Activated T-helper 2 cell treated with anti-CD3 and anti-CD28 coated beads, Interferon-gamma antibody, Interleukin-2, Interleukin-4, amounts not matched to agents 10 μg/mL and 5 μg/mL and 100 μg/mL, durations not matched to agents 14 hours and 24 hours and 36 hours (primary cell): ENCODE measurements at regions of chr6 and their contacts with region 1.

Region 1: DNA sequence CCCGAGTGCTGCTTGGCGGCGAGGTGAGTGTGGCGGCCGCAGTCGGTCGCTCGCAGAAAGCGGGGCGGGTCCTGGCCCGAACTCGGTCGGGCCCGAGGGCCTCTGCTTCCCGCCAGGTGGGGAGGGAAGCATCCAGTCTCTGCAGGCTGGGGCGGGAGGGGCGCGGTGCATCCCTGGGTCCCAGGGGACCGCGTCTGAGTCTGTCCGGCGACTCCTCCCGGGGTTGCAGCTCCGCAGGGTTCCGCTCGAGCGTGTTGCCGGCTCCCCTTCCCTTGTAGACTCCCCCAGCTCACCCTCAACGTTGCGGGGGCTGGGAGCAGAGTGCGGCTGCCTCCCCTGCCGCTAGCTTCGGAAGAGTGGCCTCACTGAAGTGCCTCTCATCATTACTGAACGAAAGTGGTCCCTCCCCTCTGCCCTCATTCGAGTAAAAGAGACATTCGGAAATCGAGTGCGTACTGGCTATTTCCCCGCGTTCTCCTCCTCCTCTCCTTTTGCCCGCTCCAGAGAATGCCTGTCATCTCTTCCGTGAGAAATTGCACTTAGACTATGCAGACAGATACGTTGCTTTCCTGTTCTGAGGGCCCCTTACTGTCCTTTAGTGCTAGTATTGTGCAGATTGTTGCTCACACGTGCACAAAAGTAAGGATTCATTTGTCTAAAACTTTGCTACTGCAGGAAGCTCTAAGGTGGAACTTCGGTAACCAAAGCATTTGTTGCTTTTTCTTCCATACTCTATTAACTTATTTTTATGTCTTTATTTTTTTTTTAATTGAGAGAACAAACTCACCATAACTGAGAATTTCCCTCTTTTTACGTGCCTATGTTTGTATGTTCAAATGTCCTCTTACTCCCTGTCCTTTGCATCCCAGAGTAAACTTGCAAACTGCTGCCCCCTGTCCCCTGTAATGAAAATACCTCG is 751 bp downstream of the MAP3K4 start:
- DNase-seq: no peak
- H3K4me3 Mint-ChIP-seq: peak overlapping the region; percentile 92
- H3K27ac Mint-ChIP-seq: peak overlapping the region; percentile 85
- H3K4me1 Mint-ChIP-seq: peaks cover 21% of the 10 kb centered on the region
- H3K27me3 Mint-ChIP-seq: peaks cover 14% of the 10 kb centered on the region

Region 2: DNA sequence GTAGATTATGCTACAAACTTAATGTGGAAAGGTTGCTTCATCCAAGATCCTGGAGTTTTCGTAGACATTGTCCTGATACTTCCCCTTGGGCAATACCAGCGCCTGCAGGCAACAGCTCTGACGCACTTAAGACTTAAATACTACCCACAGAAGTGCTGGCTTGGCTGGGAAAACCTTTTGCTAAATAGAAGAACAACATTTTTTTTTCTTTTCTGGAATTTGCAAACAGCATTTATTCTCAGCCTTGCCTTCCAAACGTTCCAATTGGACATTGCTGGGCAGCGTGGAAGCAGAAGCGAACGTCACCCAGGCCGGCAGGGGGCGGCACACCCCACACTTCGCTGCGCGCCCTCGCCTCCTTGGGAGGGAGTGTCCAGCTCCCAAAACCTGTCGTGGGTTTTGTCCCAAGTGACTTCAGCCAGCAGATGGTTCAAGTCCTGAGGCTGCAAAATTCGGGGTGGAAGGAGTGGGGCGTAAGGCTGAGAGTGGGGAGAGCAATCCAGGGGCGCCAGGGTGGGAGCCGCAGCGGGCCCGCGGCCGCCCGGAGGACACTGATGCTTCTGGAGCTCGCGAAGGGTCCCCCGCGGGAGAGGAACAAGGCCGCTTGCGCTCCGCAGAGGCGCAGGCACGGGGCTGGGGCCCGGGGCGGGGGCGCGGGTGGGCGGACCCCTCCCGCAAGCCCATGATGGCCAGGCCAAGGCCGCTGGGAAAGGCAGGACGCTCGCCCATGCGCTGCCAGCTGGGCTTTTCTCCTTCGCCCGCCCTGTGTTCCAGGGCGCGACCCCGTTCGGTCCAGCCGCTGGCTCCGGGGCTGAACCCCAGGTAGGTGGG is 61.6 kb before region 1 on chr6:
- intact Hi-C with region 1: loop called (anchors 2 kb)
- DNase-seq: peak; percentile 32
- H3K4me3 Mint-ChIP-seq: peak overlapping the region; percentile 18
- H3K27ac Mint-ChIP-seq: no peak overlapping the region
- H3K4me1 Mint-ChIP-seq: no peaks in the 10 kb centered on the region
- H3K27me3 Mint-ChIP-seq: peaks cover 25% of the 10 kb centered on the region

Region 3: GRCh38 chr6:160950507-160950906 is 41.8 kb before region 1 on chr6:
- intact Hi-C with region 1: no loop called
- DNase-seq: no peak
- H3K4me3 Mint-ChIP-seq: no peak overlapping the region
- H3K27ac Mint-ChIP-seq: no peak overlapping the region
- H3K4me1 Mint-ChIP-seq: no peaks in the 10 kb centered on the region
- H3K27me3 Mint-ChIP-seq: peaks cover 15% of the 10 kb centered on the region

Region 4: DNA sequence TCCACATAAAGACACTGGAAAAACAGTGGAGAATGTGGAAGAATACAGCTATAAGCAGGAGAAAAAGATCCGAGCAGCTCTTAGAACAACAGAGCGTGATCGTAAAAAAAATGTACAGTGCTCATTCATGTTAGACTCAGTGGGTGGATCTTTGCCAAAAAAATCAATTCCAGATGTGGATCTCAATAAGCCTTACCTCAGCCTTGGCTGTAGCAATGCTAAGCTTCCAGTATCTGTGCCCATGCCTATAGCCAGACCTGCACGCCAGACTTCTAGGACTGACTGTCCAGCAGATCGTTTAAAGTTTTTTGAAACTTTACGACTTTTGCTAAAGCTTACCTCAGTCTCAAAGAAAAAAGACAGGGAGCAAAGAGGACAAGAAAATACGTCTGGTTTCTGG is 56.3 kb after region 1 on chr6:
- intact Hi-C with region 1: no loop called
- DNase-seq: no peak
- H3K4me3 Mint-ChIP-seq: no peak overlapping the region
- H3K27ac Mint-ChIP-seq: no peak overlapping the region
- H3K4me1 Mint-ChIP-seq: peaks cover 18% of the 10 kb centered on the region
- H3K27me3 Mint-ChIP-seq: no peaks in the 10 kb centered on the region

Region 5: GRCh38 chr6:161128680-161129196 is 136.4 kb after region 1 on chr6:
- intact Hi-C with region 1: loop called (anchors 5 kb)
- DNase-seq: no peak
- H3K4me3 Mint-ChIP-seq: peak overlapping the region; percentile 15
- H3K27ac Mint-ChIP-seq: peak overlapping the region; percentile 93
- H3K4me1 Mint-ChIP-seq: peaks cover 20% of the 10 kb centered on the region
- H3K27me3 Mint-ChIP-seq: no peaks in the 10 kb centered on the region

Region 6: GRCh38 chr6:161273752-161274487 is 281.6 kb after region 1 on chr6 and contains the start of gene AGPAT4:
- intact Hi-C with region 1: loop called (anchors 1 kb)
- DNase-seq: peak; percentile 74
- H3K4me3 Mint-ChIP-seq: peak within 1 kb of the TSS; percentile 90
- H3K27ac Mint-ChIP-seq: peak within 1 kb of the TSS; percentile 94
- H3K4me1 Mint-ChIP-seq: peaks cover 30% of the 10 kb centered on the region
- H3K27me3 Mint-ChIP-seq: peaks cover 10% of the 10 kb centered on the region
- total RNA-seq, gene AGPAT4: 7.3 and 7.5 TPM in 2 replicates

Region 7: GRCh38 chr6:161393839-161394364 is 401.6 kb after region 1 on chr6:
- intact Hi-C with region 1: loop called (anchors 5 kb)
- DNase-seq: peak; percentile 48
- H3K4me3 Mint-ChIP-seq: no peak overlapping the region
- H3K27ac Mint-ChIP-seq: no peak overlapping the region
- H3K4me1 Mint-ChIP-seq: no peaks in the 10 kb centered on the region
- H3K27me3 Mint-ChIP-seq: peaks cover 39% of the 10 kb centered on the region